T-cell (primary cell): ENCODE measurements at regions of chr3 and their contacts with region 1.

Region 1: GRCh38 chr3:14921078-14921616 is 26.2 kb upstream of the NR2C2 start:
- DNase-seq: peak; percentile 56 to 89 (median 77)
- ATAC-seq: peak; percentile 93 to 94 (median 93)
- H3K4me3 ChIP-seq: no peak overlapping the region
- H3K4me3 Mint-ChIP-seq: no peak overlapping the region
- H3K27ac ChIP-seq: no peak overlapping the region
- H3K27ac Mint-ChIP-seq: no peak overlapping the region
- H3K4me1 ChIP-seq: peaks cover 0 to 8% of the 10 kb centered on the region in 2 experiments
- H3K4me1 Mint-ChIP-seq: peaks cover 0 to 5% (median 3%) of the 10 kb centered on the region in 3 donors
- H3K27me3 ChIP-seq: peaks cover 0 to 24% of the 10 kb centered on the region in 2 experiments
- H3K27me3 Mint-ChIP-seq: no peaks in the 10 kb centered on the region

Region 2: GRCh38 chr3:14630404-14631100 is 290.6 kb before region 1 on chr3:
- CTCF ChIA-PET with region 1: interaction called, 8 to 12 read pairs
- POLR2A ChIA-PET with region 1: no interaction called
- DNase-seq: no peak
- ATAC-seq: no peak
- H3K4me3 ChIP-seq: no peak overlapping the region
- H3K4me3 Mint-ChIP-seq: no peak overlapping the region
- H3K27ac ChIP-seq: no peak overlapping the region
- H3K27ac Mint-ChIP-seq: no peak overlapping the region
- H3K4me1 ChIP-seq: no peaks in the 10 kb centered on the region
- H3K4me1 Mint-ChIP-seq: no peaks in the 10 kb centered on the region
- H3K27me3 ChIP-seq: peaks cover 0 to 36% of the 10 kb centered on the region in 2 experiments
- H3K27me3 Mint-ChIP-seq: peaks cover 17 to 24% of the 10 kb centered on the region in 2 donors

Region 3: GRCh38 chr3:15271785-15272400 is 350.7 kb after region 1 on chr3:
- CTCF ChIA-PET with region 1: no interaction called
- POLR2A ChIA-PET with region 1: no interaction called
- DNase-seq: peak; percentile 70 to 95 (median 88)
- ATAC-seq: peak; percentile 74 to 90 (median 82)
- H3K4me3 ChIP-seq: peak overlapping the region in 1 of 2 donors; percentile 5
- H3K4me3 Mint-ChIP-seq: peak overlapping the region; percentile 65 to 73 (median 70)
- H3K27ac ChIP-seq: peak overlapping the region; percentile 90
- H3K27ac Mint-ChIP-seq: peak overlapping the region; percentile 93 to 95
- H3K4me1 ChIP-seq: peaks cover 39 to 91% of the 10 kb centered on the region in 2 experiments
- H3K4me1 Mint-ChIP-seq: peaks cover 79 to 89% (median 88%) of the 10 kb centered on the region in 3 donors
- H3K27me3 ChIP-seq: no peaks in the 10 kb centered on the region
- H3K27me3 Mint-ChIP-seq: no peaks in the 10 kb centered on the region

Region 4: GRCh38 chr3:15557511-15557946 is 636.4 kb after region 1 on chr3:
- CTCF ChIA-PET with region 1: no interaction called
- POLR2A ChIA-PET with region 1: no interaction called
- DNase-seq: peak in 34 of 35 experiments; percentile 4 to 79 (median 50)
- ATAC-seq: peak; percentile 83 to 91 (median 90)
- H3K4me3 ChIP-seq: no peak overlapping the region
- H3K4me3 Mint-ChIP-seq: no peak overlapping the region
- H3K27ac ChIP-seq: no peak overlapping the region
- H3K27ac Mint-ChIP-seq: peak overlapping the region; percentile 4 to 65
- H3K4me1 ChIP-seq: peaks cover 2 to 10% of the 10 kb centered on the region in 2 experiments
- H3K4me1 Mint-ChIP-seq: peaks cover 0 to 24% (median 17%) of the 10 kb centered on the region in 3 donors
- H3K27me3 ChIP-seq: no peaks in the 10 kb centered on the region
- H3K27me3 Mint-ChIP-seq: no peaks in the 10 kb centered on the region